ENCODE measurements at regions of chr2 and their contacts with region 1.

Region 1: GRCh38 chr2:203453858-203454451 is 81.1 kb downstream of the RAPH1 start:
- DNase-seq: peak in 1 of 2 donors; percentile 72
- ATAC-seq: peak; percentile 55 to 82 (median 75)
- H3K4me3 ChIP-seq: no peak overlapping the region
- H3K4me3 Mint-ChIP-seq: no peak overlapping the region
- H3K27ac ChIP-seq: no peak overlapping the region
- H3K27ac Mint-ChIP-seq: no peak overlapping the region
- H3K4me1 ChIP-seq: no peaks in the 10 kb centered on the region
- H3K4me1 Mint-ChIP-seq: no peaks in the 10 kb centered on the region
- H3K27me3 ChIP-seq: no peaks in the 10 kb centered on the region
- H3K27me3 Mint-ChIP-seq: no peaks in the 10 kb centered on the region
- CTCF ChIP-seq: peak; percentile 79

Region 2: GRCh38 chr2:202831242-202832220 is 622.4 kb before region 1 on chr2:
- intact Hi-C with region 1: loop called (anchors 1 kb)
- DNase-seq: peak; percentile 19 to 72
- ATAC-seq: peak; percentile 71 to 94 (median 93)
- H3K4me3 ChIP-seq: no peak overlapping the region
- H3K4me3 Mint-ChIP-seq: peak overlapping the region; percentile 32
- H3K27ac ChIP-seq: no peak overlapping the region
- H3K27ac Mint-ChIP-seq: peak overlapping the region in 1 of 2 donors; percentile 52
- H3K4me1 ChIP-seq: peaks cover 5% of the 10 kb centered on the region
- H3K4me1 Mint-ChIP-seq: peaks cover 9 to 10% of the 10 kb centered on the region in 2 donors
- H3K27me3 ChIP-seq: no peaks in the 10 kb centered on the region
- H3K27me3 Mint-ChIP-seq: peaks cover 0 to 9% of the 10 kb centered on the region in 2 donors
- CTCF ChIP-seq: peak; percentile 43

Region 3: DNA sequence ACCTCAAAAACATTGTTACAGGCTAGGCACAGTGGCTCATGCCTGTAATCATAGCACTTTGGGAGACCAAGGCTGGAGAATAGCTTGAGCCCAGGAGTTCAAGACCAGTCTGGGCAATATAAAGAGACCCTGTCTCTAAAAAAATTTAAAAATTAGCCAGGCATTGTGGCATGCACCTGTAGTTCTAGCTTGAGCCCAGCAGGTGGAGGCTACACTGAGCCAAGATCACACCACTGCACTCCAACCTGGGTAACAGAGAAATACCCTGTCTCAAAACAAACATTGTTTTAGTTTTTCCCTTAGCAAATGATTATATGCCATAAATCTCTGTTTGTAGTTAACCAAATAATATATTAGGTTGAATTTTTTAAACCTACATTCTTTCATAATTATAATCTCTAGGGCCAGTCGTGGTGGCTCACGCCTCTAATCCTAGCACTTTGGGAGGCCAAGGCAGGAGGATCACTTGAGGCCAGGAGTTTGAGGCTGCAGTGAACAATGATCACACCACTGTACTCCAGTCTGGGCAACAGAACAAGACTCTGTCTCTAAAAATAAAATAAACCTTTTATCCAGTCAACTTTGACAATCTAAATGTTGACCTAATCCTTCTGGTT is 228.4 kb before region 1 on chr2:
- intact Hi-C with region 1: loop called (anchors 5 kb)
- DNase-seq: peak in 1 of 2 donors; percentile 72
- ATAC-seq: peak; percentile 78 to 93 (median 86)
- H3K4me3 ChIP-seq: no peak overlapping the region
- H3K4me3 Mint-ChIP-seq: no peak overlapping the region
- H3K27ac ChIP-seq: no peak overlapping the region
- H3K27ac Mint-ChIP-seq: no peak overlapping the region
- H3K4me1 ChIP-seq: no peaks in the 10 kb centered on the region
- H3K4me1 Mint-ChIP-seq: no peaks in the 10 kb centered on the region
- H3K27me3 ChIP-seq: no peaks in the 10 kb centered on the region
- H3K27me3 Mint-ChIP-seq: no peaks in the 10 kb centered on the region
- CTCF ChIP-seq: peak; percentile 72